Head of caudate nucleus (tissue), 42 donors: ENCODE measurements at regions of chr1 and their contacts with region 1.

Region 1: GRCh38 chr1:70134148-70134547 is 71.2 kb downstream of the LRRC40 start:
- DNase-seq: no peak

Region 2: GRCh38 chr1:70003211-70003908 is 130.8 kb before region 1 on chr1:
- intact Hi-C with region 1: no loop called
- DNase-seq: no peak

Region 3: GRCh38 chr1:70487910-70488665 is 353.9 kb after region 1 on chr1:
- intact Hi-C with region 1: loop called (anchors 10 kb)
- DNase-seq: peak in 20 of 42 donors; percentile 7 to 63 (median 32)

Region 4: GRCh38 chr1:70509996-70510876 is 376.1 kb after region 1 on chr1:
- intact Hi-C with region 1: loop called (anchors 10 kb)
- DNase-seq: peak in 4 of 42 donors; percentile 11 to 45 (median 27)